Activated CD4-positive, alpha-beta T cell treated with anti-CD3 and anti-CD28 coated beads, Interleukin-2, amount 10 ng/mL, durations not matched to agents 24 days and 14 days (primary cell): ENCODE measurements at regions of chr7 and their contacts with region 1.

Region 1: GRCh38 chr7:150753826-150754603 is 16.8 kb downstream of the GIMAP5 start:
- DNase-seq: peak; percentile 76
- H3K4me3 Mint-ChIP-seq: peak overlapping the region; percentile 64
- H3K27ac Mint-ChIP-seq: peak overlapping the region; percentile 95
- H3K4me1 Mint-ChIP-seq: peaks cover 58% of the 10 kb centered on the region
- H3K27me3 Mint-ChIP-seq: peaks cover 2% of the 10 kb centered on the region

Region 2: DNA sequence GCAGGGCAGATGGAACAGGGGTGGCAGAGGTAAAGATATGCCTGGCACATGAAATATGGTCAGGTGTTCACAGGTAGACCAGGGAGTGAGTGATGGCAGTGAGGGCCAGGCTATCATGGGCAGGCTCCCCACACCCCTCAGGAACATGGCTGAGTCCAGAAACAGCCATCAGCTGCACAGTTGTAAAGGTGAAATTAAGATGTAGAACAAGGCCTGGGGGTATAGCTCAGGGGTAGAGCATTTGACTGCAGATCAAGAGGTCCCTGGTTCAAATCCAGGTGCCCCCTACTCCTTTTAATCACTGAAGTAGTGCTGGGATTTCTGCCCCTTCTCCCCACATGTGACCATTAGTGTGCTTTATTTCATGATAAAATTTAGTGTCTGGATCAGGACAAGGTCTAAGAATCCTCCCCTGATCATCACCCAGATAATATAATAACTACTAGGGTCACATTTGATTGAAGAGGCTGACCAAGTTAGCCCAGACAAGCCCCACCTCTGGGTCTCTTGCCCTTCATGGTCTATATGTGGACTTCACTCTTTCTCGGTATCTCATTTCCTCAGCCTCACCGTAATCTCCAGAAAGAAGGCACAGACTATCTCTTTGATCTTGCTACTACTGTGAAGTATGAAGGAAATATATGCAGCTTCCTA is 1423.0 kb before region 1 on chr7:
- intact Hi-C with region 1: no loop called
- DNase-seq: no peak
- H3K4me3 Mint-ChIP-seq: no peak overlapping the region
- H3K27ac Mint-ChIP-seq: no peak overlapping the region
- H3K4me1 Mint-ChIP-seq: no peaks in the 10 kb centered on the region
- H3K27me3 Mint-ChIP-seq: peaks cover 8% of the 10 kb centered on the region

Region 3: GRCh38 chr7:150356265-150356897 is 397.6 kb before region 1 on chr7:
- intact Hi-C with region 1: loop called (anchors 5 kb)
- DNase-seq: peak; percentile 79
- H3K4me3 Mint-ChIP-seq: no peak overlapping the region
- H3K27ac Mint-ChIP-seq: peak overlapping the region; percentile 41
- H3K4me1 Mint-ChIP-seq: peaks cover 39% of the 10 kb centered on the region
- H3K27me3 Mint-ChIP-seq: peaks cover 3% of the 10 kb centered on the region

Region 4: GRCh38 chr7:150448789-150449147 is 305.2 kb before region 1 on chr7:
- intact Hi-C with region 1: loop called (anchors 1 kb)
- DNase-seq: peak; percentile 96
- H3K4me3 Mint-ChIP-seq: peak overlapping the region; percentile 100
- H3K27ac Mint-ChIP-seq: peak overlapping the region; percentile 98
- H3K4me1 Mint-ChIP-seq: peaks cover 54% of the 10 kb centered on the region
- H3K27me3 Mint-ChIP-seq: no peaks in the 10 kb centered on the region

Region 5: GRCh38 chr7:150567169-150567568 is 186.8 kb before region 1 on chr7 and contains the start of gene GIMAP4:
- intact Hi-C with region 1: loop called (anchors 1 kb)
- DNase-seq: peak; percentile 77
- H3K4me3 Mint-ChIP-seq: peak within 1 kb of the TSS; percentile 86
- H3K27ac Mint-ChIP-seq: peak within 1 kb of the TSS; percentile 95
- H3K4me1 Mint-ChIP-seq: peaks cover 59% of the 10 kb centered on the region
- H3K27me3 Mint-ChIP-seq: no peaks in the 10 kb centered on the region
- total RNA-seq, gene GIMAP4: 61.1 and 62.7 TPM in 2 replicates

Region 6: GRCh38 chr7:150631866-150632864 is 121.8 kb before region 1 on chr7 and contains the start of gene GIMAP6:
- intact Hi-C with region 1: loop called (anchors 2 kb)
- DNase-seq: peak; percentile 85
- H3K4me3 Mint-ChIP-seq: peak within 1 kb of the TSS; percentile 93
- H3K27ac Mint-ChIP-seq: peak within 1 kb of the TSS; percentile 92
- H3K4me1 Mint-ChIP-seq: peaks cover 62% of the 10 kb centered on the region
- H3K27me3 Mint-ChIP-seq: no peaks in the 10 kb centered on the region
- total RNA-seq, gene GIMAP6: 35.5 and 35.8 TPM in 2 replicates

Region 7: DNA sequence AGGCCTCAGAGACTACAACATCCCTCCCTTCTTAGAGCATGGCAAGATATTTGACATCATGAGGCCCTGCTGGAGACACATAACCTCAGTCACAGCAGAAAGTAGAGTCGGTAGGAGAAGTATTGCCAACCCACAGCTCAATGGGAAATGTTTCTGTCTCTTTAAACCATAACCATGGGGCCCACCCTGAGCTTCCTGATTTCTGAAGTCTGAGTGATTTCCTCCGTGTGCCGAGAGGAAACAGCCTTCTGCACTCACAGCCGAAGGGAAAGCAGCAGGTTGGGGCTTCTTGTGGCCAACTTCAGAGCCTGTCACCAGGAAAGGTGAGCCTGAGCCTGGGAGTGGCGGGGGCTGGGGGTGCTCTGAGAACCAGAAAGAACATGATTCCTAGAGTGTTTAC is 37.6 kb before region 1 on chr7 and contains the start of gene GIMAP1:
- intact Hi-C with region 1: loop called (anchors 2 kb)
- DNase-seq: peak; percentile 91
- H3K4me3 Mint-ChIP-seq: peak within 1 kb of the TSS; percentile 89
- H3K27ac Mint-ChIP-seq: peak within 1 kb of the TSS; percentile 87
- H3K4me1 Mint-ChIP-seq: peaks cover 52% of the 10 kb centered on the region
- H3K27me3 Mint-ChIP-seq: no peaks in the 10 kb centered on the region
- total RNA-seq, gene GIMAP1: 4.9 and 6.0 TPM in 2 replicates

Region 8: DNA sequence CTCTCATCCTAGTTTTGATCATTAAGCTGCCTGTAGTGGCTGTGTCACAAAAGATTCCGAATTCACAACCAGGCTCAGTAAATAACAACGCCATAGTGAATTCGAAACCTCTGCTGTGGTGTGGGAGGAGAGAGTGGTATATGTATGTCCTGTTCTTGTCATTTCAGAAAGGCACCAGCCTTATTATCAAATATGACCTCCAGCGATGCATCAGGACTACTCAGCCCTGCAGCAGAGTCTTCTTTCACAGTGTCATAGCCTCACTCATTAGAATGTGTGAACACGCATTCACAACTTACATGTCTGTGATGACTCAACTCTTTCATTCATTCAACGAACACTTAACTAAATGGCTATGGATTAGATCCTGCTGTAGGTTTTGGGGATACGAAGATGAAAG is 113.6 kb after region 1 on chr7:
- intact Hi-C with region 1: no loop called
- DNase-seq: peak; percentile 40
- H3K4me3 Mint-ChIP-seq: no peak overlapping the region
- H3K27ac Mint-ChIP-seq: no peak overlapping the region
- H3K4me1 Mint-ChIP-seq: no peaks in the 10 kb centered on the region
- H3K27me3 Mint-ChIP-seq: peaks cover 19% of the 10 kb centered on the region

Region 9: DNA sequence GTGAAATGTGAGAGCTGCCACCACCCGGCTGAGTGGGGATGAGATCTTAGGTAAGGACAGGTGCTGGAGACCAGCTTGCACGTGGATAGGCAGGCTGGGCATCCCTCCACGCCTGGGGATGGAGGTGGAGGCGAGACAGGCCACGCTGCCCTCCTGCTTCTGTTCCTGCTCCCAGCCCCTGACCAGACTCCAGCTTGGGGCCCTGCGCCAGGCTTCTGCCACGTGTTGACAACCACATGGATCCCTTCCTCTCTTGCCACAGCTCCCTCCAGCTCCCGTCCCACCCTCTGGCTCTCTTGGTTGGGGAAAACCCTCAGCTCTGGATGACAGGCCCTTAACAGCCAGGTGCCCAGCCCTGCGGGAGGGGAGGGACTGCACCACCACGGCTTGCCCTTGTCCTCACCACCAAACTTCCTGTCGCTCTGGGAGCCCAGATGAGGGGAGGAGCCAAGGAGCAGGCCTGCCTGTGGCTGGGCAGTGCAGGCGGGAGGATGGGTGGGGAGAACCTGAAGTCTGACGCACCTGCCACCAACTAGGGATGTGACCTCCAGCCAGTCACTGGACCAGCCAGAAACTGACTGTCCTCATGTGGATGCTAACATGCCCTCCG is 188.1 kb after region 1 on chr7:
- intact Hi-C with region 1: no loop called
- DNase-seq: peak; percentile 75
- H3K4me3 Mint-ChIP-seq: no peak overlapping the region
- H3K27ac Mint-ChIP-seq: no peak overlapping the region
- H3K4me1 Mint-ChIP-seq: peaks cover 9% of the 10 kb centered on the region
- H3K27me3 Mint-ChIP-seq: peaks cover 3% of the 10 kb centered on the region